ENCODE measurements at regions of chr20 and their contacts with region 1.

Region 1: DNA sequence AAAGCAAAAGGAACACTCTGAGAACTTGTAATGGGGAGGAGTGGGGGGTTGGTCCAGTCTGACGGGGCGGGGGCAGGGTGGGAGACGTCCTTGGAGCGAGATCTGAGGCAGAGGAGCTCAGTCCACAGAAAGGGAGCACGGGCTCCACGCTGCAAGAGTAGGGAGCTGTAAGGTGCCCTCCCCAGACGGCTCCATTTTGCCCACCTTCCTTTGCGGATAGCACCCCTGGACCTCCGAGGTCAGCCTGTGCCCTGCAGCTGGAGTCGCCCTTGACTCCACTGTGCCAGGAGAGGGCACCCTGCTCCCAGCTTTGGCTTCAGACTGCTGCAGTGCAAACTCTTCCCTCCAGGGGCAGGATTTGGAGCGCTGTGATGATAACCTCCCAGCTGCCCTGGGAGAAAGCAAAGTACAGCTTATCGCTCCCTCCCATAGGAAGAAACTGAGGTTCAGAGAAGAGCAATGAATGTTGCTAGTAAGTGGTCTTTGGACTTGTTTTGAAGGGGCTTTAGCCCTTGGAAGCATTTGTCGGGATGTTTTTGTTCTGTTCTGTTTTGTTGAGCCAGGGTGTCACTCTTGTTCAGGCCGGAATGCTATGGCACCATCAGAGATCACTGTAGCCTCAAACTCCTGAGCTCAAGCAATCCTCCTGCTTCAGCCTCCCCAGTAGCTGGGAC is 9.5 kb upstream of the AHCY start:
- DNase-seq: peak; percentile 95
- H3K4me3 Mint-ChIP-seq: no peak overlapping the region
- H3K27ac Mint-ChIP-seq: no peak overlapping the region
- H3K4me1 Mint-ChIP-seq: peaks cover 11% of the 10 kb centered on the region
- H3K27me3 Mint-ChIP-seq: peaks cover 14% of the 10 kb centered on the region

Region 2: GRCh38 chr20:33915726-33916331 is 396.9 kb before region 1 on chr20:
- CTCF ChIA-PET with region 1: no interaction called
- intact Hi-C with region 1: no loop called
- DNase-seq: peak; percentile 71
- H3K4me3 Mint-ChIP-seq: no peak overlapping the region
- H3K27ac Mint-ChIP-seq: no peak overlapping the region
- H3K4me1 Mint-ChIP-seq: peaks cover 11% of the 10 kb centered on the region
- H3K27me3 Mint-ChIP-seq: no peaks in the 10 kb centered on the region

Region 3: GRCh38 chr20:34334654-34335407 is 22.1 kb after region 1 on chr20:
- CTCF ChIA-PET with region 1: interaction called, 10 read pairs
- intact Hi-C with region 1: no loop called
- DNase-seq: no peak
- H3K4me3 Mint-ChIP-seq: no peak overlapping the region
- H3K27ac Mint-ChIP-seq: no peak overlapping the region
- H3K4me1 Mint-ChIP-seq: no peaks in the 10 kb centered on the region
- H3K27me3 Mint-ChIP-seq: no peaks in the 10 kb centered on the region

Region 4: DNA sequence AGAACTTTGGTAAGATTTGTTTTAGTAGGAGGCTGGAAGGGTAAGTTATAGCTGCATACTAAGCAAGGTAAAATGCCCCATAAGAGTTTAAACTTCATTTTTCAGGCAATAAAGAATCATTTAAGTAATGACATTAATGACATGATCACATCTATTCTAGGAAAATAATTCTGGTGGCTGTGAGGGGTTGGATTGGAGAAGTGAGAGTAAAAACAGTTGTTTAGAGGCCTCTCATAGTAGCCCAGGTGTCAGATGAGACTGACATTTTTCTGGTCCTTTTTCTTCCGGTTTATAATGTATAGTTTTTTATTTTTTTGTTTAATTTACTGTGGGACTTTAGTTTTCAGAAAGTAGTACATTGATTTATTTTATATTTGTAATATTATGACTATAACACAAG is 91.2 kb after region 1 on chr20:
- CTCF ChIA-PET with region 1: interaction called, 11 read pairs
- intact Hi-C with region 1: no loop called
- DNase-seq: no peak
- H3K4me3 Mint-ChIP-seq: no peak overlapping the region
- H3K27ac Mint-ChIP-seq: peak overlapping the region; percentile 2
- H3K4me1 Mint-ChIP-seq: peaks cover 52% of the 10 kb centered on the region
- H3K27me3 Mint-ChIP-seq: no peaks in the 10 kb centered on the region

Region 5: GRCh38 chr20:34449674-34450592 is 137.3 kb after region 1 on chr20:
- CTCF ChIA-PET with region 1: interaction called, 13 read pairs
- intact Hi-C with region 1: no loop called
- DNase-seq: no peak
- H3K4me3 Mint-ChIP-seq: no peak overlapping the region
- H3K27ac Mint-ChIP-seq: no peak overlapping the region
- H3K4me1 Mint-ChIP-seq: peaks cover 8% of the 10 kb centered on the region
- H3K27me3 Mint-ChIP-seq: no peaks in the 10 kb centered on the region

Region 6: DNA sequence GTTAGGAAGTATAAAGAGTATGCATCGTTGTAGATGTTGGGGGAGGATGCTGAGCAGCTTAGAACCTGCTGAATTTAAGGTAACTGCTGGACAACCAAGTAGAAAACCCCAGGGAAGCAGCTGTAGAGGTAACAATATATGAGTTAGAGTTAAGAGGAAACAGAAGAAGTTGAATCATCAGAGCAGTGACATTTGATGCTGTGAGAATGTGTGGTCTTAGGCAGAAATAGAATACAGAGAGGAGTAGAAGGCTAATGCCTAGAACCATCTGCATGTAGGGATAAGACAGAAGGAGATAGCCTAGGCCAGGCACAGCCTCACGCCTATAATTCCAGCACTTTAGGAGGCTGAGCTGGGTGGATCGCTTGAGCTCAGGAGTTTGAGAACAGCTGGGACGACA is 181.0 kb after region 1 on chr20:
- CTCF ChIA-PET with region 1: interaction called, 11 read pairs
- intact Hi-C with region 1: no loop called
- DNase-seq: no peak
- H3K4me3 Mint-ChIP-seq: no peak overlapping the region
- H3K27ac Mint-ChIP-seq: no peak overlapping the region
- H3K4me1 Mint-ChIP-seq: no peaks in the 10 kb centered on the region
- H3K27me3 Mint-ChIP-seq: no peaks in the 10 kb centered on the region

Region 7: DNA sequence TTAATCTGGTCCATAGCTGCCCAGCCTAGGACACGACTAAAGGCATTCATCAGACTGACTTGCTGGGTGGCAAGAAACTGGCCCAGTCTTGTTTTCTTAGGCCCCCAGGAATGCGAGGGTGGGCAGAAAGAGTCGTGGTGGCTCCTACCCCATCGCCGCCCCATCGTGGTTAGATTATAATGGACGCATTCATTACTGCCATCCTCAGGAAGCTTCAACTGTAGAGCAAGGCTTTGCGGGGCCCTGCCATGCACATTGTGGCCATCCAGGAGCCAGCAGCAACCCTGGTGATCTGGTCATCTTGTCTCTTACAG is 219.7 kb after region 1 on chr20:
- CTCF ChIA-PET with region 1: interaction called, 13 read pairs
- intact Hi-C with region 1: loop called (anchors 5 kb)
- DNase-seq: no peak
- H3K4me3 Mint-ChIP-seq: no peak overlapping the region
- H3K27ac Mint-ChIP-seq: no peak overlapping the region
- H3K4me1 Mint-ChIP-seq: no peaks in the 10 kb centered on the region
- H3K27me3 Mint-ChIP-seq: no peaks in the 10 kb centered on the region

Region 8: GRCh38 chr20:34768096-34768495 is 455.4 kb after region 1 on chr20:
- CTCF ChIA-PET with region 1: interaction called, 45 read pairs
- intact Hi-C with region 1: loop called (anchors 1 kb)
- DNase-seq: no peak
- H3K4me3 Mint-ChIP-seq: no peak overlapping the region
- H3K27ac Mint-ChIP-seq: no peak overlapping the region
- H3K4me1 Mint-ChIP-seq: no peaks in the 10 kb centered on the region
- H3K27me3 Mint-ChIP-seq: no peaks in the 10 kb centered on the region

Measured in activated naive CD4-positive, alpha-beta T cell treated with anti-CD3 and anti-CD28 coated beads for 36 hours (primary cell).